Activated CD8-positive, alpha-beta T cell treated with anti-CD3 and anti-CD28 coated beads, Interleukin-2, amount 10 ng/mL, durations not matched to agents 7 days and 5 days (primary cell): ENCODE measurements at regions of chr1 and their contacts with region 1.

Region 1: DNA sequence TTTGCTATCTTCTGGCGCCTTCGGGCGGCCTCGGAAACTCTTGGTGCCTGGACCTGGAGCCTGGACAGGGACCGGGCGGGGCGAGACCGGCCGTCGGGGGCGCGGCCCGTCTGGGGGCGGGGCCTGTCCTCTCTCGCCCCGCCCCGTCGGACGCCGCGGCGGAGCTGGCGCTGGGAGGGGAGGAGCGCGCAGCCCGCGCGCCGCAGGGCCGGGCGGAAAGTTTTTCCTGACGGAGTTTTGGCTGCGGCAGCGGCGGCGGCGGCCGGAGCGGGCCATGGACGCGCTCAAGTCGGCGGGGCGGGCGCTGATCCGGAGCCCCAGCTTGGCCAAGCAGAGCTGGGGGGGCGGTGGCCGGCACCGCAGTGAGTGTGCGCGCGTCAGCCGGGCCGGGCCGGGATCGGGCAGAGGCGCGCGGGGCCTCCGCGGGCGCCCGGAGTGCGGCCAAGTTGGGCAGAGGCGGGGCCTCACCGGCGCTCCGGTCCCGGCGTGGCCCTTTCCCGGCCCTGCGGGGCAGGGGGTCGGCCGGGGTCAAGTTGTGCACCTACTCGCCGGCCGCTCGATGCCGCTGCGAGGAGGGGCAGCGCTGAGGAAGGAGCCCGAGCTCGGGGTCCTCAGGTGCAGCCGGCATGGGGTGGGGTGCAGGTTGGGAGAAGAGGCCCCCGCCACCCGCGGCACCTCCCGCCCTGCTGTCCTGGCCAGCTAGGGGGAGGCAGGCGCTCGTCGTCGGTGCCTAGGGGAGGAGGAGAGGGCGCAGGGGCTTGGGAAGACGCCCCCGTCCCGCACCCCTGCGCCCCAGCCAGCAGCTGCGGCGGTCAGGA is at the start of gene LDLRAP1:
- DNase-seq: peak; percentile 59
- ATAC-seq: peak; percentile 89
- H3K4me3 Mint-ChIP-seq: peak within 1 kb of the TSS; percentile 80
- H3K27ac Mint-ChIP-seq: peak within 1 kb of the TSS; percentile 16
- H3K4me1 Mint-ChIP-seq: peaks cover 40% of the 10 kb centered on the region
- H3K27me3 Mint-ChIP-seq: no peaks in the 10 kb centered on the region
- total RNA-seq, gene LDLRAP1: 30.7 to 31.3 TPM

Region 2: DNA sequence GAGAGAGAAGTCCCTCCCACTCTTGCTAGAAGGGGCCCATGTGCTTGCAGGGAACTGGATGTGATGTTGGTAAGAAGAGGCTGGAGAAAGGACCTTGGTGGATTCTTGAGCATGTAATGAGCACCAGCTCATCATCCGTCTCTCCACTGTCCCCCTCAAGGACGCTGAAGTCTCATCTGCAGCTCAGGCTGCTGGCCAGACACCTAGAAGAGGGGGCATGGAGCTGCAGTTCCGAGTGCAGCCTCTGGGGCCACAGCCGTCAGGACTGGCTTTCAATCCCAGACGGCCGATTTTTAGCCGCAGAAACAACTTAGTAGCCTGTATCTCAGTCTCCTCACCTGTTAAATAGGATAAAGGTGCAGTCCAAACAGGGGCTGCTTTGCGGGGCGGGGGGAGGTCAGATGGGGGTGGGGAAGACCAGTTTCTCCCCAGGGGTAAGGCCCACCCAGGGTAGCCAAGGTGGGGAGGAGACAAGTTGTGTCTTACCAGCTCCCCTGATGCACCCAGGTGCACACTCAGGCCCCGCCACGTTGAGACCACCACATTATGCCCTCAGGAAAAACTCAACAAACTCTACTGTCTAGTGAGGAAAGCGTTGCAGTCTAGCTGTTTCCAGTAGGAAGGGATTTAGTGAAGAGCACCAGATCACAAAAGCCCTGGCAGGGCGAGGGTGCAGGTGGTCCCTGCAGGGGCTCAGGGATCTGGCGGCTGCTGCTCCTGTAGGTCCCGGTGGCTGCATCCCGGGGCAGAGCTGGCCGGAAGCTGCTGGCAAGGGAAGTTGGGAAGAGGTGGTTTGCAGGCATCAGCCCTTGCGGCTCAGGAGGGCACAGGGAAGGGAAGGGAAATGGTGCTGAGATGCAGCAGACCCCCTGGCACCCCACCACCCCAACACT is 29.3 kb after region 1 on chr1:
- CTCF ChIA-PET with region 1: interaction called, 19 read pairs
- POLR2A ChIA-PET with region 1: no interaction called
- DNase-seq: peak; percentile 67
- ATAC-seq: peak; percentile 72
- H3K4me3 Mint-ChIP-seq: no peak overlapping the region
- H3K27ac Mint-ChIP-seq: no peak overlapping the region
- H3K4me1 Mint-ChIP-seq: peaks cover 22% of the 10 kb centered on the region
- H3K27me3 Mint-ChIP-seq: no peaks in the 10 kb centered on the region